Activated naive CD4-positive, alpha-beta T cell treated with anti-CD3 and anti-CD28 coated beads for 36 hours (primary cell): ENCODE measurements at regions of chr4 and their contacts with region 1.

Region 1: DNA sequence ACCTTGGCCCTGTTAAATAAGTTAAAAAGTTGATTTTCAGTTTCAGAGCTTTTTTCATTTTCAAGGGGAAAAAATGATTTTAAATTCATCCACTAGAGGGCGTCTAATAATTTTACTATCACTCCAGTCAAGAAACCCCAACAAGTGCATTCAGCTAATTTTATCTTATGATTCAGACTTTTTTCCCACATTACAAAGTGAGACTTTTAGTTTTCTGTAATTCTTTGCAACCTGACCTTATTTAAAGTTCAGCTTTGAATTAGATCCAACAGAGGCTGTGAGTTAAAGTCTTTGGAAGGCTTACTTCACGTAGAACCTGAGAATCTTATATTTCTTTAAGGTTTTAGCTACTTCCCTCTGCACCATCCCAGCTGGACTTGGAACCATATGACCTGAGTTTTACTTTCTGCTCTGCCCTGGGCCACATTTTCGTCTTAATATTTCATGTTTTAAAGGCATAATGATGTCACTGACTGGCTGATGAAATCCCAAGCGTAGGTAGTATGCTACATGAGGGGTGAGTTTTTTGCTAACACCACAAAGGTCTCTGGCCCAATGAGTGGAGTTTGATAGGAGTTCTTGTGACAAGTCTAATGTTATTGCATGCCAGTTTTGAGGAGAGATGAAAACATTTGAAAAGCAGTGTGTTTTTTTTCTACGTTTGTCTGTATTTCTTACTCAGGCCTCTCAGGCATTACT is 7.2 kb downstream of the GNRHR start:
- DNase-seq: peak; percentile 5
- H3K4me3 Mint-ChIP-seq: peak overlapping the region; percentile 1
- H3K27ac Mint-ChIP-seq: peak overlapping the region; percentile 73
- H3K4me1 Mint-ChIP-seq: peaks cover 17% of the 10 kb centered on the region
- H3K27me3 Mint-ChIP-seq: no peaks in the 10 kb centered on the region

Region 2: GRCh38 chr4:67684839-67685531 is 62.0 kb before region 1 on chr4:
- CTCF ChIA-PET with region 1: interaction called, 3 read pairs
- intact Hi-C with region 1: loop called (anchors 1 kb)
- DNase-seq: no peak
- H3K4me3 Mint-ChIP-seq: no peak overlapping the region
- H3K27ac Mint-ChIP-seq: peak overlapping the region; percentile 11
- H3K4me1 Mint-ChIP-seq: peaks cover 32% of the 10 kb centered on the region
- H3K27me3 Mint-ChIP-seq: no peaks in the 10 kb centered on the region

Region 3: DNA sequence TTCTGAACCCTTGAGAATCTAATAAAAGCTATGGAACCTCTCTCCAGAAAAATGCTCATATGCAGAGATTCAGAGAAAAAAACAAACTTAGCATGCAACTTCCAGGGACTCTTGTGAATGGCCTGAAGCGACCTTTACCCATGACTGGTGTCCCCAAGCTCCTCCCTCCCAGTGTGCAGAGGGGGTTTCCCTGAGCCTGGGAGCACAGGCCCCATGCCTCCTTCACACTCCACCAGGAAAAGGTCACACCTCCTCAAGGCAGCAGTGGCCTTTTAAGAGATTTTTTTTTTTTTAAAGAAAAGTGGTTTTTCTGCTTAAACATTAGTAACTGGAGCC is 32.7 kb before region 1 on chr4:
- CTCF ChIA-PET with region 1: interaction called, 4 read pairs
- intact Hi-C with region 1: loop called (anchors 1 kb)
- DNase-seq: peak; percentile 71
- H3K4me3 Mint-ChIP-seq: peak overlapping the region; percentile 18
- H3K27ac Mint-ChIP-seq: peak overlapping the region; percentile 85
- H3K4me1 Mint-ChIP-seq: peaks cover 31% of the 10 kb centered on the region
- H3K27me3 Mint-ChIP-seq: no peaks in the 10 kb centered on the region

Region 4: GRCh38 chr4:67779631-67780030 is 32.7 kb after region 1 on chr4:
- CTCF ChIA-PET with region 1: no interaction called
- intact Hi-C with region 1: loop called (anchors 2 kb)
- DNase-seq: no peak
- H3K4me3 Mint-ChIP-seq: no peak overlapping the region
- H3K27ac Mint-ChIP-seq: no peak overlapping the region
- H3K4me1 Mint-ChIP-seq: peaks cover 5% of the 10 kb centered on the region
- H3K27me3 Mint-ChIP-seq: no peaks in the 10 kb centered on the region

Region 5: GRCh38 chr4:68175562-68176155 is 428.7 kb after region 1 on chr4:
- CTCF ChIA-PET with region 1: interaction called, 3 read pairs
- intact Hi-C with region 1: loop called (anchors 1 kb)
- DNase-seq: peak; percentile 75
- H3K4me3 Mint-ChIP-seq: no peak overlapping the region
- H3K27ac Mint-ChIP-seq: no peak overlapping the region
- H3K4me1 Mint-ChIP-seq: peaks cover 3% of the 10 kb centered on the region
- H3K27me3 Mint-ChIP-seq: peaks cover 21% of the 10 kb centered on the region

Region 6: GRCh38 chr4:68218044-68218443 is 471.1 kb after region 1 on chr4:
- CTCF ChIA-PET with region 1: no interaction called
- intact Hi-C with region 1: no loop called
- DNase-seq: no peak
- H3K4me3 Mint-ChIP-seq: no peak overlapping the region
- H3K27ac Mint-ChIP-seq: no peak overlapping the region
- H3K4me1 Mint-ChIP-seq: no peaks in the 10 kb centered on the region
- H3K27me3 Mint-ChIP-seq: peaks cover 26% of the 10 kb centered on the region